GM13976 (cell line): ENCODE measurements at regions of chr5 and their contacts with region 1.

Region 1: GRCh38 chr5:143395638-143396352 is 7.7 kb downstream of the NR3C1 start:
- DNase-seq: no peak
- CTCF ChIP-seq: no peak

Region 2: DNA sequence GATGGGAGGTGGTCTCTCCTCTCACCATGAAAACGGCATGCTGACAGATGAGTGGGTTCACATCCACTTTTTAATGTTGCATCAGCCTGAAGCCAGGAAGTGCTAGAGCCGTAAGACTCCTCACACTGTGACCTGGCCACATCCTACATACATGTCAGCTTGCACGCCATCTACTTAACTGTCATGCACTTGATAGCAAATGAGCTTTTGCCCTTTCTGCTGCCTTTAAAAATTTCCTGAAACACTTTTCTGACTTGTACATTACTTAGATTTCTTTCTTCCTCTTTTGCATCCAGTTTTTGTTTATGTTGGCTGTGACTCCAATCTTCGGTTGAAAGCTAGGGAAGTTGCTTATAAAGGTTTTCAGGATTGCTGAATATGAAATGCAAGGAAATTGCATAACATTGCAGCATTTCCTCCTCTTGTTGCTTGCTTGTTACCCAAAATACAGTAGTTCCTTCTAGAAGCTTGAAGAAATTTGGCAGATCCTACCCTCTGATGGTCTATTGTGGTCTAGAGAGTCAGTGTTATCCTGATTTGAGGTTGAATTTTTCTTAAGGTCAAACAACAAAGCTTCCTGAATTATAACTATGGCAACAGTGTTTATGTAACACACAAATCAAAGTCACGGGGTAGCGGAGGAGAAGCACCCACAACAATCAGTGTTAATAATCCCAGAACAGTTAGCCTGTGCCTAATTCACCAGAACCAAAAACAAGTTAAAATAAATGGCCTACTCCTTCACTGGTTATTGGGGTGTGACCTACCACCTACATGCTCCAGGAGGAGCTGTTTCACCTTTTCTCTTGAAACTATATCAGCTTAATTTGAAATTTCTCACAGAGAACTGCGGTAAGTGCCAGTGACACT is 393.1 kb before region 1 on chr5:
- in situ Hi-C with region 1: loop called (anchors 10 kb)
- DNase-seq: peak; percentile 58
- CTCF ChIP-seq: peak; percentile 33

Region 3: GRCh38 chr5:143229896-143230675 is 165.7 kb before region 1 on chr5:
- in situ Hi-C with region 1: loop called (anchors 5 kb)
- DNase-seq: peak; percentile 79
- CTCF ChIP-seq: no peak

Region 4: GRCh38 chr5:143495821-143496275 is 100.1 kb after region 1 on chr5:
- in situ Hi-C with region 1: no loop called
- DNase-seq: no peak
- CTCF ChIP-seq: no peak

Region 5: GRCh38 chr5:143557061-143557818 is 161.4 kb after region 1 on chr5:
- in situ Hi-C with region 1: no loop called
- DNase-seq: peak; percentile 27
- CTCF ChIP-seq: no peak